Activated CD8-positive, alpha-beta T cell treated with anti-CD3 and anti-CD28 coated beads for 36 hours (primary cell): ENCODE measurements at regions of chr20 and their contacts with region 1.

Region 1: GRCh38 chr20:32789896-32790750 is 27.9 kb downstream of the DNMT3B start:
- DNase-seq: peak; percentile 82
- ATAC-seq: peak; percentile 82
- H3K4me3 Mint-ChIP-seq: no peak overlapping the region
- H3K27ac Mint-ChIP-seq: no peak overlapping the region
- H3K4me1 Mint-ChIP-seq: peaks cover 32% of the 10 kb centered on the region
- H3K27me3 Mint-ChIP-seq: no peaks in the 10 kb centered on the region
- CTCF ChIP-seq: peak; percentile 99

Region 2: GRCh38 chr20:32564921-32565734 is 225.0 kb before region 1 on chr20:
- CTCF ChIA-PET with region 1: no interaction called
- POLR2A ChIA-PET with region 1: no interaction called
- intact Hi-C with region 1: no loop called
- DNase-seq: no peak
- ATAC-seq: no peak
- H3K4me3 Mint-ChIP-seq: no peak overlapping the region
- H3K27ac Mint-ChIP-seq: peak overlapping the region; percentile 19
- H3K4me1 Mint-ChIP-seq: peaks cover 45% of the 10 kb centered on the region
- H3K27me3 Mint-ChIP-seq: no peaks in the 10 kb centered on the region
- CTCF ChIP-seq: no peak

Region 3: DNA sequence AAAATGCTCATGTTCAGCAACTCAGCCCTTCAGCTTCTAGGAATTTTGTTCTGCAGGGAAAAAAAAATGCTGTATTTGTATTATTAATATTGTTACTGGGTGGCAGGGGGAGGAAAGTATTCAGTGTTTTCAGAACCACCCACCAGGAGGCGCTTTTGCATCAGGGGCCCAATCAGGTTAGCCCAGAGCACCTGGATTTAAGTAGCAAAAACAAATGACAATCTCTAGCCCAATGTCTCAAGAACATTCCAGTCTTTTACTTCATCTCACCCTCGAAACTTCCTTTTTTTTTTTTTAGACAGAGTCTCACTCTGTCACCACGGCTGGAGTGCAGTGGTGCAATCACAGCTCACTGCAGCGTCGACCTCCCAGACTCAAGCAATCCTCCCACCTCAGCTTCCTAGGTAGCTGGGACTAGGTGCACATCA is 115.7 kb before region 1 on chr20:
- CTCF ChIA-PET with region 1: interaction called, 20 read pairs
- POLR2A ChIA-PET with region 1: no interaction called
- intact Hi-C with region 1: no loop called
- DNase-seq: peak; percentile 87
- ATAC-seq: peak; percentile 37
- H3K4me3 Mint-ChIP-seq: no peak overlapping the region
- H3K27ac Mint-ChIP-seq: peak overlapping the region; percentile 36
- H3K4me1 Mint-ChIP-seq: peaks cover 24% of the 10 kb centered on the region
- H3K27me3 Mint-ChIP-seq: no peaks in the 10 kb centered on the region
- CTCF ChIP-seq: peak; percentile 89

Region 4: DNA sequence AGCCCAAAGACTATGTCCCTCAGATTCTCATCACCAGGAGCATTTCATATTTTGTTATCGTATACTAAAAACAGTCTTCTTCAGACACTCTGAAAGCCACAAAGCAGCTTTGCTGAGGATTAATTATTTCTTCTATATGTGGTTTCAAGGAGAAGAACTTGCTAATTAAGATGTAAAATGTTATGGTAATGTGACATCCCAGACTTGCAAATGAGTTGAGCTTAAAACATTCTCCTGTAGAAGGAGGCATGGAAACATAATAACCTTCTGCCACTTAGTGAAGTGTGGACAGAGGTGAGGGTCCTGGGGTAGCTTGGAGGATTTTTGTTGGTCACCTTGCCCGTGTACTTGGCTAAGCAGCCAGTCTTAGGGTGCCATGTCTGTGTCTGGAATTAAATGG is 13.0 kb after region 1 on chr20:
- CTCF ChIA-PET with region 1: interaction called, 18 read pairs
- POLR2A ChIA-PET with region 1: no interaction called
- intact Hi-C with region 1: no loop called
- DNase-seq: no peak
- ATAC-seq: no peak
- H3K4me3 Mint-ChIP-seq: no peak overlapping the region
- H3K27ac Mint-ChIP-seq: no peak overlapping the region
- H3K4me1 Mint-ChIP-seq: no peaks in the 10 kb centered on the region
- H3K27me3 Mint-ChIP-seq: no peaks in the 10 kb centered on the region
- CTCF ChIP-seq: no peak

Region 5: DNA sequence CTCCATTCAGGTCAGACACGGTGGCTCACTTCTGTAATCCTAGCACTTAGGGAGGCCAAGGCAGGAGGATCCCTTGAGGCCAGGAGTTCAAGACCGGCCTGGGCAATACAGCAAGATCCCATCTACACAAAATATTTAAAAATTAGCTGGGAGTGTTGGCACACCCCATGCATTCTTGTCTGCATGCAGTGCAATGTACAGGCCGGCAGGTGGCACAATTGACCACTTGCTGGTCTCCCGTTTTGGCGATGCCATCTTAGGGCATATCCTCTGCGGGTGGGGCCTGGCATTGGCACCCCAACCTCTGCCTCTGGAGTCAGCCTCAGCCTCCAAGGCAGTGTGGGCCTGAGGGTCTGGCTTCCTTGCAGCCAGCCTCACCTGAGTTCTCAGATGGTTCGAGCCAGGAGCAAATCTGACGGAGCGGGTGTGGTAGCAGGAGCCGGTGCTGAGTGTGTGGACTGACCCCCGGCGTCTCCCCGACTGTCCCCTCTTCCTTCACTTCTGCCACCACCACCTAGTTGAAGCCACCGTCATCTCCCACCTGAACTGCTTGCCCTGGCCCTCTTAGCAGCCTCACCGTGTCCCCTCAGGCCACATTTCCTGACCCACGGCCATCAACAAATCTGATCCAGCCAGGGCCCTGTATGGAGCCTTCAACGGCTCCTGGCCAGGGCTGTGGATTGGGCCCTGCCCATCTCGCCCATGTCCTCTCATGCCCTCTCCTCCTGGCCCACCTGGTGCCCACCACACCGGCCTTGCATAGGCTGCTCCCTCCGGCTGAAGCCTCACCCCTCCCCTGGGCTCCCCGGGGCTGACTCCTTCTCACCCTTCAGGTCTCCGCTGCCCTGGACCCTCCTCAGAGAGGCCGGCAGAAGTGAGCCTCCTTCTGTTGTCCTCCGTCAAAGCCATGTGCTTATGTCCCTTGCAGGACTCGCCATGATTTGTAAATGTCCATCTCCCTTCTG is 112.6 kb after region 1 on chr20:
- CTCF ChIA-PET with region 1: interaction called, 10 read pairs
- POLR2A ChIA-PET with region 1: no interaction called
- intact Hi-C with region 1: no loop called
- DNase-seq: peak; percentile 78
- ATAC-seq: peak; percentile 94
- H3K4me3 Mint-ChIP-seq: no peak overlapping the region
- H3K27ac Mint-ChIP-seq: no peak overlapping the region
- H3K4me1 Mint-ChIP-seq: peaks cover 19% of the 10 kb centered on the region
- H3K27me3 Mint-ChIP-seq: no peaks in the 10 kb centered on the region
- CTCF ChIP-seq: peak; percentile 94

Region 6: DNA sequence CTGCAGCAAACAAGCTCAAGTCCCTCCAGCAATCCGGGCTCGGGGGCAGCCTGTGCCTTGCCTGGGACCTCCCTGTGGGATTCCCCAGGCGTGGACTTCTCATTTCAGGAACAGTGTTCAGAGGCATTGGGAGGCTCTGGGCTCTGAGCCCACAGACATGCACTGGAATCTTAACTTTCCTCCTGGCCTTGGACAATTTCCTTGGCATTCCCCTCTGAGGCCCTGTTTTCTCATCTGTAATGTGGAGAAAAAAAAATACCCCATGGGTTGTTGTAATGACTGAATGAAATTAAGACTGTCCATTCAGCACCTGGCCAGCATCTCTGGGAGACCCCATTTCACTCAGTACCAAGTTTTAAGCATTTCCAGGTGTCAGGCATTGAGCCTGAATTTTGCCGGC is 306.9 kb after region 1 on chr20:
- CTCF ChIA-PET with region 1: interaction called, 4 read pairs
- POLR2A ChIA-PET with region 1: no interaction called
- intact Hi-C with region 1: loop called (anchors 10 kb)
- DNase-seq: no peak
- ATAC-seq: no peak
- H3K4me3 Mint-ChIP-seq: no peak overlapping the region
- H3K27ac Mint-ChIP-seq: no peak overlapping the region
- H3K4me1 Mint-ChIP-seq: peaks cover 2% of the 10 kb centered on the region
- H3K27me3 Mint-ChIP-seq: no peaks in the 10 kb centered on the region
- CTCF ChIP-seq: no peak